ENCODE measurements at regions of chr14 and their contacts with region 1.

Region 1: GRCh38 chr14:102362545-102363181 is at the starts of genes CINP and TECPR2:
- DNase-seq: peak; percentile 97 to 99
- H3K4me3 ChIP-seq: peak within 1 kb of the TSS; percentile 89
- H3K27ac ChIP-seq: peak within 1 kb of the TSS; percentile 37
- H3K4me1 ChIP-seq: peaks cover 17% of the 10 kb centered on the region
- H3K27me3 ChIP-seq: no peaks in the 10 kb centered on the region
- CTCF ChIP-seq: no peak
- total RNA-seq, gene CINP: 54.6 and 65.1 TPM in 2 replicates
- total RNA-seq, gene TECPR2: 29.7 and 34.7 TPM in 2 replicates

Region 2: GRCh38 chr14:101335061-101335661 is 1027.5 kb before region 1 on chr14:
- CTCF ChIA-PET with region 1: no interaction called
- POLR2A ChIA-PET with region 1: no interaction called
- intact Hi-C with region 1: loop called (anchors 5 kb)
- DNase-seq: peak in 1 of 2 experiments; percentile 49
- H3K4me3 ChIP-seq: no peak overlapping the region
- H3K27ac ChIP-seq: no peak overlapping the region
- H3K4me1 ChIP-seq: peaks cover 30% of the 10 kb centered on the region
- H3K27me3 ChIP-seq: no peaks in the 10 kb centered on the region
- CTCF ChIP-seq: no peak

Region 3: DNA sequence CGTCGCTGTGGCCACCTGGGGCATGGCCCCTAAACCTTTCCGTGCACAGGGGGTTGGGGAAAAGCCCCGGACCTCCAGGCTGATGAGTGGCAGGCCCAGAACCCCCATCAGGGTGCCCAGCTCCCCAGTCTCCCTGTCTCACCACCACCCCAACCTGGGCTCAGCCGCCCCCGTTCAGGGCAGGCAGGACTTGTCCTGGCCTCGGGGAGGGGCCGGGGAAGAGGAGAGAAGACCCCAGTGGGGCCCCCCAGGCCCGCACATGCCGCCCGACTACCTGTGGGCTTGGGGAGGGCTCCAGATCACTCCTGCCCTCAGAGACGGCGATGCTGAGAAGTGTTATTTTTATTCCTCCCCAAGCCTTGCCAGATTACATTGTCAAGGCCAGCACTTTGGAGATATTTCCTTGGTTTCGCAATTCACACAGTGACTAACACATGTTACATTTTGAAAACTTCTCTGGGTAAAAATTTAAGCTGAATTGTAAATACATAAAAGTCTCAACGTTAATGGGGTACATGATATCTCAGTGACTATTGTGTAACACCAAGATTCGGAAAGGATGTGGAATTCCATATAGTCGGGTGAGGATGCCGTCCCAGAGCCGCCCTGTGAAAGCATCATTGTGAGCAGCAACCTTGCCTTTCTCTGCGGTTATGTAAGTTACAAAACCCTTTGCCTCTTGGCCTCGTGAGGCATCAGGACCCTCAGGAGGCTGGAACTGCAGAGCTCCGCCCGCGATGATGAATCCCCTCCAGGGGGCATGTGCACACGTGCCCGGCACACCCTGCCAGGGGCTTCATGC is 887.0 kb before region 1 on chr14:
- CTCF ChIA-PET with region 1: no interaction called
- POLR2A ChIA-PET with region 1: interaction called, 3 read pairs
- intact Hi-C with region 1: loop called (anchors 2 kb)
- DNase-seq: peak; percentile 44 to 94
- H3K4me3 ChIP-seq: peak overlapping the region; percentile 68
- H3K27ac ChIP-seq: peak overlapping the region; percentile 91
- H3K4me1 ChIP-seq: peaks cover 59% of the 10 kb centered on the region
- H3K27me3 ChIP-seq: no peaks in the 10 kb centered on the region
- CTCF ChIP-seq: no peak

Region 4: DNA sequence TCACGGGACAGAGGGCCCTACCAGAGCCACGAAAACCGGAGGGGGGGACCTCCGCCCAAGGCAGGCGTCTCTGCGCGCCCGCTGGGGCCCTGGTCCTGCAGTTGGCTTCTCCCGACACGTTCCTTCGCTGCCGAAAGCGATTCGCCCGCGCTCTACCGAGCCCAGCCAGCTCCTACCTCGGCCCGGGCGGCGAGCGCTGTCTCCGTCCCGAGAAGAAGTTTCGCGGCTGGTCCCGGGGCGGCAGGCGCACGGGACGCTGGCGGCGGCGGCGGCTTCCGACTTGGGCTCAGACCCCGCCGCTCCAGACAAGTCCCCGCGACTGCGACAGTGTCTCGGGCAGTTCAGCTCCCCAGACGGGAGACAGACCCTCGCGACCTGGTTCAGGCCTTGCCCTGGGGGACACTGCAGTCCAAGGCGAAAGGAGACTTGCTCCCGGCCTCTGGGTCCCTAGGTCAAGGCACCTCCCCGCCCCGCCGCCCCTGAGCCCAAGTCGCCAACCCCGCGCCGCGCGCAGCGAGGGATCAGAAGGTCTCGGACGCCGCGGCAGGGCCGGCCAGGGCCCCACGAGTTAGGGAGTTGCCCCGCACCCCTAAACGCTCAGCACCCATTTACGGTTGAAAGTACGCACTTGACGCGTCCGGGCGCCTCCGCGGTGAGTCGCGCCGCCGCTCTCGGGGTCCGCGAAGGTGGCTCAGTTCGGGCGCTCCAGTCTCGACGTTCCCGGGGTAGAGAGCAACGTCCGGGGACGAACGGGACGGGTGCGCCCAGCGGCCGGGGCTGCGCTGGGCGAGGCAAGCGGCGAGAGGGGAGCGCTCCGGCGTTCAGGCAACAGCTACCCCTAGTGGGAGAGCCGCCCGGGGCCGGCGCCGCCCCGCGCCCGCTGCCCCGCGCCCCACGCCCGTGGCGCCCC is 802.8 kb before region 1 on chr14:
- CTCF ChIA-PET with region 1: no interaction called
- POLR2A ChIA-PET with region 1: no interaction called
- intact Hi-C with region 1: loop called (anchors 10 kb)
- DNase-seq: no peak
- H3K4me3 ChIP-seq: no peak overlapping the region
- H3K27ac ChIP-seq: no peak overlapping the region
- H3K4me1 ChIP-seq: no peaks in the 10 kb centered on the region
- H3K27me3 ChIP-seq: peaks cover 20% of the 10 kb centered on the region
- CTCF ChIP-seq: no peak

Region 5: DNA sequence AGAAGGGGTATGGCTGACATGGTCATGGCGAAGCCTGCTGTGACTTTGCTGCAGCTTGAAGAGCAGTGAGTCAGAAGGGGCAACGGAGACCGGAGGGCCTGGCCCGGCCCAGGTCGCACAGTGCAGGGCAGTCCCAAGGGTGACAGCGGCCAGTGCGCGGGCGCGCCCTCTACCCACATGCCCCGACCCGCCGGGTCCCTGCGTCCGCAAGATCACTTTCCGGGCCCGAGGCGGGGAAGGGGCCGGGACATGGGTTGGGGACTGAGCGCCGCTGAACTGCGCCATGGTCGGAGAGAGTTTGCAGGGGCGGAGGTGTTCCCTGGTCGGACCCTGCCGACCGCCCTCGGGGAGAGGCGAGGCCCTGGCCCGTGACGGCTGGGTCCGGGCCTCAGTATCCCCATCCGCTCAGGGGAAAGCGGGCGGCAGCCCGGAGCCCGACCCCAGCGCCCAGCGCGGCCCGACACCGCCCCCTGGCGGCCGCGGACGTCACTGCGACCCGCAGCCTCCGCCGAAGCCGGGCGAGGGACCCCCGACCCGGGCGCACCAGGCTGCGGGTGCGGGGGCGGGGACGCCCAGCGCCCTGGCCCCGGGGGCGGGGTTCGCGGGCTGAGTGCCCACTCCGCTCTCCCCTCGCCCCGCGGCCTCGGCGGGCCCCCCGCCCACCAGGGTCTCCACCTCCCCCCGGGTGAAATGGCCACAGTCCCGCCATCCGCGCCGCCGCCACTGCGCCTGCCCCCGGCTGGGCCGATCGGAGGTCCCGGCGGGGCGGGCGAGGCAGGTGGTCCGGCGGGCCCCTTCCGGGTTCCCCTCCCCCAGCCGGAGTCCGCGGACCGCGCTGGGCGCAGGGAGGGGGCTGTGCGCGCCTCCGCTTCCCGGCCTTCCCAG is 154.1 kb after region 1 on chr14:
- CTCF ChIA-PET with region 1: no interaction called
- POLR2A ChIA-PET with region 1: no interaction called
- intact Hi-C with region 1: loop called (anchors 5 kb)
- DNase-seq: peak; percentile 55 to 72
- H3K4me3 ChIP-seq: peak overlapping the region; percentile 73
- H3K27ac ChIP-seq: no peak overlapping the region
- H3K4me1 ChIP-seq: peaks cover 7% of the 10 kb centered on the region
- H3K27me3 ChIP-seq: no peaks in the 10 kb centered on the region
- CTCF ChIP-seq: peak; percentile 89

Region 6: DNA sequence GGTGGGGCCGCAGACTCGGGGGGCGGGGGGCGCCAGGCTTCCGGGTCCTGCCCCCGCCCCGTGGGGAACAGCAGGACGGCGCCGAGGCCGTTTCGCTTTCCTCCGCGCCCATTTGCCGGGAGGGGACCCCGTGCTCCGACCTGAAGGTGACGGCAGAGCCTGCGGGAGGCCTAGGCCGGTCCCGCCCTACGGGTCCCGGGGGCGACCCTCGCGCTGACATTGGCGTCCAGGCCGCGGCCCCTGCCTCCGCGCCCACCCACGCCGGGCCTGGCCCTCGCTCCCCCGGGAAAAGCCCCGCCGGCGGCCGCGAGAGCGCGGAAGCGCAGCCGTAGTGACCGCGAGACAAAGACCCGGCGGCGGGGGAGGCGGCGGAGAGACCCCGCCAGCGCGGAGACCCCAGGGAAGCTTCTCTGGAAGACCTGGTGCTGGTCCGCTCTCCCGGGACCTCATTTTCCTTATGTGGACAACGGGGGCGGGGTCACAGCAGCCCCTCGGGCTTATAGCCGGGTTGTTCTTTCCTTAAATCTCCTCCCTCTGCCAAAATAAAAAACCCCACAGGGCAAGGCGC is 192.7 kb after region 1 on chr14:
- CTCF ChIA-PET with region 1: no interaction called
- POLR2A ChIA-PET with region 1: no interaction called
- intact Hi-C with region 1: no loop called
- DNase-seq: no peak
- H3K4me3 ChIP-seq: no peak overlapping the region
- H3K27ac ChIP-seq: no peak overlapping the region
- H3K4me1 ChIP-seq: peaks cover 31% of the 10 kb centered on the region
- H3K27me3 ChIP-seq: no peaks in the 10 kb centered on the region
- CTCF ChIP-seq: no peak

Measured in PC-9 (cell line).